Activated naive CD4-positive, alpha-beta T cell treated with anti-CD3 and anti-CD28 coated beads, Interleukin-2, amount 10 ng/mL, durations not matched to agents 7 days and 5 days (primary cell): ENCODE measurements at regions of chr17 and their contacts with region 1.

Region 1: GRCh38 chr17:2416010-2416734 is 15.3 kb upstream of the MNT start:
- DNase-seq: peak; percentile 89
- H3K4me3 Mint-ChIP-seq: no peak overlapping the region
- H3K27ac Mint-ChIP-seq: no peak overlapping the region
- H3K4me1 Mint-ChIP-seq: peaks cover 2% of the 10 kb centered on the region
- H3K27me3 Mint-ChIP-seq: no peaks in the 10 kb centered on the region

Region 2: GRCh38 chr17:2253768-2254406 is 162.3 kb before region 1 on chr17:
- CTCF ChIA-PET with region 1: no interaction called
- DNase-seq: peak; percentile 59
- H3K4me3 Mint-ChIP-seq: peak overlapping the region; percentile 32
- H3K27ac Mint-ChIP-seq: peak overlapping the region; percentile 90
- H3K4me1 Mint-ChIP-seq: peaks cover 84% of the 10 kb centered on the region
- H3K27me3 Mint-ChIP-seq: no peaks in the 10 kb centered on the region

Region 3: GRCh38 chr17:2392252-2393173 is 23.7 kb before region 1 on chr17:
- CTCF ChIA-PET with region 1: interaction called, 467 read pairs
- DNase-seq: peak; percentile 97
- H3K4me3 Mint-ChIP-seq: peak overlapping the region; percentile 96
- H3K27ac Mint-ChIP-seq: peak overlapping the region; percentile 99
- H3K4me1 Mint-ChIP-seq: peaks cover 65% of the 10 kb centered on the region
- H3K27me3 Mint-ChIP-seq: no peaks in the 10 kb centered on the region

Region 4: DNA sequence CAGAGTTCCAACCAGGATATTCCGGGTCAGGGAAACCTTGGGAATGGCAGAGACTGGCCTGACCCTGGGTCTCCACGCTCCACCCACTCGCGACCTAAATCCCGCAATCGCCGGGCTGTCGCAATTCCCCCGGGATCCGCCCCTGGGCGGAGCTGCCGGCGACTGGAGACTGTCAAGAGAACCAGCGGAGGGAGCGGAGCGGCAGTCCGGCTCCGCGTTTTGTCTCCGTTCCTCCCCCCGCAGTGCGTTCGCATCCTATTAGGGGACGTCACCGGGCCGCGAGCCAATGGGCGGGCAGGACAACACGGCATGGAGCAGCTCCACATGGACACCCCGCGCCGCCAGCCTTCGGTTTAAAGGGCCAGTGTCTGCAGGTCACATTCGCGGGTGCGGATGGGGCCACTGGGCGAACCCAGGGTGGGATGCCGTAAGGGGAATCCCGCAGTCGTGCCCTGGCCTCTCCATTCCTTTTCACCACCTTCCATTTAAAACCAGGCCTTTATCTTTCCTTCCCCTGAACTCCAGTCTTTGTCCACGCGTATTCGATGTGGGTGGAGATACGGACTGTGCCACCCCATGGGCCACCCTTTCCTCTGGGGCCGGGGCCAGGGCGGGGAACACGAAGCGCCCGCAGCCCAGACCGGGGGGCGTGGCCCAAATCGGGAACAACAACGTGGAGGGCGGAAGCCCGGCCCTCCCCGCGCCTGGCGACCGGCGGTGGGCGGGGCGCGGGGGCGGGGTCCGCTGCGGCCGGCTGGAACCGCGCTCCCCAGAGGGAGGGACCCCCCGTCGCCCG is 14.5 kb before region 1 on chr17:
- CTCF ChIA-PET with region 1: interaction called, 23 read pairs
- DNase-seq: peak; percentile 99
- H3K4me3 Mint-ChIP-seq: peak overlapping the region; percentile 98
- H3K27ac Mint-ChIP-seq: peak overlapping the region; percentile 100
- H3K4me1 Mint-ChIP-seq: peaks cover 58% of the 10 kb centered on the region
- H3K27me3 Mint-ChIP-seq: peaks cover 6% of the 10 kb centered on the region